ENCODE measurements at regions of chr7 and their contacts with region 1.

Region 1: GRCh38 chr7:139829025-139829774 is at the start of gene TBXAS1:
- H3K4me3 Mint-ChIP-seq: peak within 1 kb of the TSS; percentile 87
- H3K27ac Mint-ChIP-seq: peak within 1 kb of the TSS; percentile 95
- H3K4me1 Mint-ChIP-seq: peaks cover 52% of the 10 kb centered on the region
- H3K27me3 Mint-ChIP-seq: peaks cover 8% of the 10 kb centered on the region

Region 2: GRCh38 chr7:139860090-139860775 is 31.0 kb after region 1 on chr7:
- intact Hi-C with region 1: loop called (anchors 1 kb)
- H3K4me3 Mint-ChIP-seq: peak overlapping the region; percentile 48
- H3K27ac Mint-ChIP-seq: peak overlapping the region; percentile 93
- H3K4me1 Mint-ChIP-seq: peaks cover 59% of the 10 kb centered on the region
- H3K27me3 Mint-ChIP-seq: no peaks in the 10 kb centered on the region

Region 3: GRCh38 chr7:139930286-139930965 is 101.2 kb after region 1 on chr7:
- intact Hi-C with region 1: no loop called
- H3K4me3 Mint-ChIP-seq: no peak overlapping the region
- H3K27ac Mint-ChIP-seq: no peak overlapping the region
- H3K4me1 Mint-ChIP-seq: peaks cover 42% of the 10 kb centered on the region
- H3K27me3 Mint-ChIP-seq: no peaks in the 10 kb centered on the region

Measured in dendritic cell treated with granulocyte-macrophage colony-stimulating factor and Interleukin-4, amounts not matched to agents 40 ng/mL and 50 ng/mL, for 4 days (primary cell).